Activated B cell treated with CpG ODN at 0.5 μM for 24 hours (primary cell): ENCODE measurements at regions of chr5 and their contacts with region 1.

Region 1: DNA sequence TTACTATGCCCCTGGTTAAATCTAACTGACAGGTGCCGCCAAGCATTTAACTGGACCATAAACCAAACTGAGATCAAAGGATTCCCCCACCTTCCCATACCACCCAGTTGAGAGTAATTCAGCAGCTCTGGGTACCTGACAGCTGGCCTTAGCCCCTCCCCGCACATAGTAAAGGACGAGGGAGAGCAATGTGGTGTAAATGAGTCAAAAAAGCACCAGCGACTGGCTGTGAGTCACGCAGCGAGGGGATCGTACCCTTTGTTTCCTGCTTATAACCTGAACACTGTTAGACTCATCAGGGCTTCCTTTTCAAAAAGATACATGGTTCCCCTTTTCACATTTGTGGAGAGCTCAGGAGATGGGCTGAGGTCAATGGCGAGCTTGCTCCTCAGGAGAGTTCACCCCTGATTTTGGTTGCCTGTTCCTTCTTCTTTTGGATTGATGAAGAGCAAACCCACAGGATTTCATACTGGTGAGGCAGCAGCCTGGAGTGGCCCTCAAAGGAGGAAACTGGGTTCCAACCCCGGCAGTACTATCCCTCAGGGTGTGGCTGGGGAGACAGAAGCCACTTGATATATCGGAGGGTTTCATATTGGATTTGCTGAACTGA is 71.5 kb downstream of the ANKRD33B start:
- DNase-seq: peak; percentile 57
- ATAC-seq: peak; percentile 64
- H3K4me3 Mint-ChIP-seq: peak overlapping the region; percentile 82
- H3K27ac Mint-ChIP-seq: peak overlapping the region; percentile 99
- H3K4me1 Mint-ChIP-seq: peaks cover 81% of the 10 kb centered on the region
- H3K27me3 Mint-ChIP-seq: no peaks in the 10 kb centered on the region
- CTCF ChIP-seq: no peak

Region 2: DNA sequence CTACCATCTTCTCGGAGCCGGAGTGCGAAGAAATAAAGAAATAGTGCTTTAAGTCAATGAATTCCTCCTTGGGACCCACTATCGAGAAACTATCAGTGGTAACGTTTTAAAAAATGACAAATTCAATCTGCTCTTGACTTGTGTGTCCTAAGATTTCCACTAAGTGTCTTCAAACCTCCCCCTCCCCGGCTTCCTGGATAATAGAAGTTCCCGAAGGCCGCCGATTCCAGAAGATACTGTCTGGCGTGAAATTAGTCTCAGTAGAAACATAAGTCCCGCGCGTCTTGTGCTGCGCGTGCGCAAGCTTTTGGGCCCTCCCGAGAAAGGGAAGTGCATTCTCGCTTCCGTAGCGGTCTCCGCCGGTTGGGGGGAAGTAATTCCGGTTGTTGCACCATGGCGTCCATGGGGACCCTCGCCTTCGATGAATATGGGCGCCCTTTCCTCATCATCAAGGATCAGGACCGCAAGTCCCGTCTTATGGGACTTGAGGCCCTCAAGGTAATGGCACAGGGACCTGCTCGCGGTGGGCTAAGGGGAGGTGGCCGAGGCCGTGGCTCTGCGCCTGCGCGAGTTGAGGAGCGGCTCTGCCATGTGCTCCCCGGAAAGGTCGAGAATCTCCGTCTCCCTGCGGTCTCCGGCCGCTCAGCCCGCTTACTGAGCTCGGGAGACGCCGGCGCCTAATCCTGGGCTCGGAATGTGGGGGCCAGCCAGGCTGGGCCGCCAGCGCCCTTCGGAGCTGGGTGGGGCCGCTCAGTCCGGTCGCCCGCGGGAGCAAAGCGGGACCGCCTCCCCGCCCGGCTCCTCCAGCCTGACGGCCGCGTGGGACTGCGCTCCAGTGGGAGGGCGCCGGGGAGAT is 385.2 kb before region 1 on chr5 and contains the start of gene CCT5:
- CTCF ChIA-PET with region 1: no interaction called
- POLR2A ChIA-PET with region 1: interaction called, 15 read pairs
- intact Hi-C with region 1: loop called (anchors 1 kb)
- DNase-seq: peak; percentile 80
- ATAC-seq: peak; percentile 80
- H3K4me3 Mint-ChIP-seq: peak within 1 kb of the TSS; percentile 98
- H3K27ac Mint-ChIP-seq: peak within 1 kb of the TSS; percentile 99
- H3K4me1 Mint-ChIP-seq: peaks cover 52% of the 10 kb centered on the region
- H3K27me3 Mint-ChIP-seq: no peaks in the 10 kb centered on the region
- CTCF ChIP-seq: no peak
- total RNA-seq, gene CCT5: 203 and 213 TPM in 2 replicates

Region 3: GRCh38 chr5:10505517-10506095 is 129.8 kb before region 1 on chr5:
- CTCF ChIA-PET with region 1: no interaction called
- POLR2A ChIA-PET with region 1: no interaction called
- intact Hi-C with region 1: loop called (anchors 1 kb)
- DNase-seq: no peak
- ATAC-seq: peak; percentile 98
- H3K4me3 Mint-ChIP-seq: peak overlapping the region; percentile 8
- H3K27ac Mint-ChIP-seq: peak overlapping the region; percentile 76
- H3K4me1 Mint-ChIP-seq: peaks cover 13% of the 10 kb centered on the region
- H3K27me3 Mint-ChIP-seq: no peaks in the 10 kb centered on the region
- CTCF ChIP-seq: no peak

Region 4: DNA sequence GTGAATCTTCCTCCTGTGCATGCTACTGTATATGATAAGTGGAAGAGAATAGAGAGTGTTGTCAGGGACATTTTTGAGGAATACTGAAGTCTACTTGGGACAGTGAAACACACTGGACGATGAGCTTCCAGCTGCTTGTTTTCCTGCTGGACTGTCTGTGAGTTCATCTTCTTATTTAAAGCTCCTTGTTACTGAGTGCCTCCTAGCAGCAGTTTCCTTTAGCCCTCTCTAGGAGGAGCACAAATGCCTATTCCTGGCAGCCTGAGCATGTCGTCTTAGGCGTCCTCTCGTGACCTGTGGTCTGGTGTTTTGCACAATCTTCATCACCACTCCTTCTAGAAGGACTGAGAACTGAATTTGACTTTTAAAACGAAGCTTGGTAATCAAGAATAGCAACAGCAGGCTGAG is 27.7 kb before region 1 on chr5:
- CTCF ChIA-PET with region 1: interaction called, 3 read pairs
- POLR2A ChIA-PET with region 1: interaction called, 43 read pairs
- intact Hi-C with region 1: loop called (anchors 1 kb)
- DNase-seq: no peak
- ATAC-seq: peak; percentile 35
- H3K4me3 Mint-ChIP-seq: peak overlapping the region; percentile 80
- H3K27ac Mint-ChIP-seq: peak overlapping the region; percentile 90
- H3K4me1 Mint-ChIP-seq: peaks cover 67% of the 10 kb centered on the region
- H3K27me3 Mint-ChIP-seq: no peaks in the 10 kb centered on the region
- CTCF ChIP-seq: no peak

Region 5: GRCh38 chr5:10684303-10685086 is 49.1 kb after region 1 on chr5:
- CTCF ChIA-PET with region 1: interaction called, 7 read pairs
- POLR2A ChIA-PET with region 1: interaction called, 34 read pairs
- intact Hi-C with region 1: loop called (anchors 1 kb)
- DNase-seq: no peak
- ATAC-seq: peak; percentile 62
- H3K4me3 Mint-ChIP-seq: peak overlapping the region; percentile 29
- H3K27ac Mint-ChIP-seq: peak overlapping the region; percentile 82
- H3K4me1 Mint-ChIP-seq: peaks cover 15% of the 10 kb centered on the region
- H3K27me3 Mint-ChIP-seq: no peaks in the 10 kb centered on the region
- CTCF ChIP-seq: no peak

Region 6: DNA sequence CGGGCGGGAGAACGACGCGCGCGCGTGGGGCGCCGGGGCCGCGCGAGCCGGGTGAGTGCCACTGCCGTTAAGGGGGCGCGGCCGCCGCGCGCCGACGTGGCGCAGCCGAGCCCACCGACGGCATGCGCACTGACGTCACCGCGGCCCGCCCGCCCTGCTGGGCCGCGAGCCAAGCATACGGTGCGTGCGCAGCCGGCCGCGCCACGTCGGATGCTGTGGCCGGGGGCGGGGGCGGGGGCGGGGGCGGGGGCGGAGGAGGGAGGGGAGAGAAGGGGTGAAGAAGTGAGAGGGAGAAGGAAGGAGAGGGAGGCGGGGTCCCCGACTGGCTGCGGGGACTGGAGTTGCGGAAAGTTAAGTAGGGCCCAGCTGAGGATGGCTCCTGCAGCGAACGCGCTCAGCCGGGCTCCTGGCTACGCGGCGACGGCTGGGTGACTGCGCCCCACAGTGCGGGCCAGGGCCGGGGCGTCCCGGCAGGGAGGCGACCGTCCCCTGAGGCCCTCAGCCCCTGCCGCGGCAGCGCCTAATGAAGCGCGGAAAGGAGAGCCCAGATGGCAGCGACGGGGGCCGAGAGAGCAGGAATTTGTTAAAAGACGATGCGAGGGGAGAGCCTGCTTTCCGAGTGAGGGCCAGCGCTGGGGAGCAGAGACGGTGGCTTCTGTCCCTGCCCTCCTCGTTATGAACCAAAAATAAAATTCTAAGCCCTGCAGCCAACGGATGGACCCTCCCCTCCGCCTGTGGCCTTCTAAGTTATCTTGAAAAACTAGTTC is 126.0 kb after region 1 on chr5 and contains the start of gene DAP:
- CTCF ChIA-PET with region 1: interaction called, 3 read pairs
- POLR2A ChIA-PET with region 1: interaction called, 4 read pairs
- intact Hi-C with region 1: loop called (anchors 1 kb)
- DNase-seq: peak; percentile 92
- ATAC-seq: peak; percentile 82
- H3K4me3 Mint-ChIP-seq: peak within 1 kb of the TSS; percentile 91
- H3K27ac Mint-ChIP-seq: peak within 1 kb of the TSS; percentile 92
- H3K4me1 Mint-ChIP-seq: peaks cover 57% of the 10 kb centered on the region
- H3K27me3 Mint-ChIP-seq: no peaks in the 10 kb centered on the region
- CTCF ChIP-seq: no peak
- total RNA-seq, gene DAP: 50.5 and 51.3 TPM in 2 replicates